ENCODE measurements at regions of chr5 and their contacts with region 1.

Region 1: GRCh38 chr5:75053304-75054133 is 1.2 kb upstream of the GCNT4 start:
- DNase-seq: peak; percentile 36 to 84 (median 70)
- ATAC-seq: peak; percentile 34 to 57
- H3K4me3 Mint-ChIP-seq: peak overlapping the region; percentile 77 to 97 (median 94)
- H3K27ac Mint-ChIP-seq: peak overlapping the region; percentile 91 to 99 (median 98)
- H3K4me1 Mint-ChIP-seq: peaks cover 48 to 86% (median 81%) of the 10 kb centered on the region in 4 donors
- H3K27me3 Mint-ChIP-seq: peaks cover 0 to 8% (median 0%) of the 10 kb centered on the region in 5 donors

Region 2: GRCh38 chr5:74934949-74935751 is 118.4 kb before region 1 on chr5:
- POLR2A ChIA-PET with region 1: interaction called, 18 read pairs
- DNase-seq: peak in 7 of 10 donors; percentile 2 to 60 (median 18)
- ATAC-seq: peak; percentile 87 to 88
- H3K4me3 Mint-ChIP-seq: peak overlapping the region; percentile 63 to 80 (median 74)
- H3K27ac Mint-ChIP-seq: peak overlapping the region; percentile 28 to 91 (median 80)
- H3K4me1 Mint-ChIP-seq: peaks cover 16 to 34% (median 30%) of the 10 kb centered on the region in 4 donors
- H3K27me3 Mint-ChIP-seq: peaks cover 0 to 12% (median 0%) of the 10 kb centered on the region in 5 donors

Region 3: DNA sequence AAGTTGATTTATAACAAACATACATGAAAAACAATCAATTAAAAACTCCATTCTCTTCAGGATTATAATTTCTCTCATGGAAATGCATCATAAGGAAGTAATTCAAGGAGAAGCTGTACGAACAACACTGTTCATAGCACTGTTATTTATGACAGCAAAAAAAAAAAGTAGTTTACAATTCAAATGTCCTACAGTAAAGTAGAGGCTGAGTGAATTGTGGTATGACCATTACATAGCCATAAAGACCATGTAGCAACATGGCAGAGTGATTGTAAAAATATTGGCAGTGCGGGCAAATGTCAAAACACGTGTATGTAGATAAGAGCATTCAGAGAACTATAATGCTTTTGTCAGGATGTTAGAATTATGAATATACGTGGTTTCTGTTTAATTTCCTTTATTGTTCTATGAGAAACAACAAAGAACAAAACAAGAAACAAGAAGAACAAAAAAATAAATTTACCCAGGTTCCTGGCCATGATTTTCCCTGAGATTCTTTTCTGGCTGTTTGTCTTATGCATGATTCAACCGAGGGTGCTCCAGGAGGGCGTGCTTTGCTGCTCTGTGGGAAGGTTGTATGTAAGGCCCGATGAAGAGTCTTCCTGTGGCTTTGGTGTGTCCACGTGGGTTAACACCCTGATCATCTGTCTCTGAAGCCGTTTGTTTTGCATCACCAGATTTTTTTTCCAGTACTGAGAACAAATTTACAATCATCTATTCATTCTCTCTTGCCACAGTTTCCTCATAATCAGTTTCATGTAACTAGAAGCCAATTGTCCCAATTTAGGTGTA is 30.0 kb before region 1 on chr5:
- POLR2A ChIA-PET with region 1: interaction called, 13 read pairs
- DNase-seq: peak in 9 of 10 donors; percentile 9 to 72 (median 25)
- ATAC-seq: peak; percentile 77 to 79
- H3K4me3 Mint-ChIP-seq: peak overlapping the region; percentile 19 to 82 (median 70)
- H3K27ac Mint-ChIP-seq: peak overlapping the region; percentile 35 to 93 (median 86)
- H3K4me1 Mint-ChIP-seq: peaks cover 22 to 66% (median 47%) of the 10 kb centered on the region in 4 donors
- H3K27me3 Mint-ChIP-seq: no peaks in the 10 kb centered on the region

Region 4: GRCh38 chr5:75042522-75042921 is 11.0 kb before region 1 on chr5:
- POLR2A ChIA-PET with region 1: interaction called, 35 read pairs
- DNase-seq: no peak
- ATAC-seq: no peak
- H3K4me3 Mint-ChIP-seq: peak overlapping the region in 1 of 10 donors; percentile 24
- H3K27ac Mint-ChIP-seq: peak overlapping the region in 3 of 10 donors; percentile 11 to 53 (median 24)
- H3K4me1 Mint-ChIP-seq: peaks cover 31 to 79% (median 62%) of the 10 kb centered on the region in 4 donors
- H3K27me3 Mint-ChIP-seq: no peaks in the 10 kb centered on the region

Measured in naive thymus-derived CD8-positive, alpha-beta T cell (primary cell).